GM18951 (cell line): ENCODE measurements at regions of chr1 and their contacts with region 1.

Region 1: GRCh38 chr1:93447516-93448291 is at the start of gene FNBP1L:
- POLR2A ChIP-seq: no peak

Region 2: GRCh38 chr1:93328809-93329760 is 118.6 kb before region 1 on chr1:
- in situ Hi-C with region 1: no loop called
- POLR2A ChIP-seq: no peak

Region 3: DNA sequence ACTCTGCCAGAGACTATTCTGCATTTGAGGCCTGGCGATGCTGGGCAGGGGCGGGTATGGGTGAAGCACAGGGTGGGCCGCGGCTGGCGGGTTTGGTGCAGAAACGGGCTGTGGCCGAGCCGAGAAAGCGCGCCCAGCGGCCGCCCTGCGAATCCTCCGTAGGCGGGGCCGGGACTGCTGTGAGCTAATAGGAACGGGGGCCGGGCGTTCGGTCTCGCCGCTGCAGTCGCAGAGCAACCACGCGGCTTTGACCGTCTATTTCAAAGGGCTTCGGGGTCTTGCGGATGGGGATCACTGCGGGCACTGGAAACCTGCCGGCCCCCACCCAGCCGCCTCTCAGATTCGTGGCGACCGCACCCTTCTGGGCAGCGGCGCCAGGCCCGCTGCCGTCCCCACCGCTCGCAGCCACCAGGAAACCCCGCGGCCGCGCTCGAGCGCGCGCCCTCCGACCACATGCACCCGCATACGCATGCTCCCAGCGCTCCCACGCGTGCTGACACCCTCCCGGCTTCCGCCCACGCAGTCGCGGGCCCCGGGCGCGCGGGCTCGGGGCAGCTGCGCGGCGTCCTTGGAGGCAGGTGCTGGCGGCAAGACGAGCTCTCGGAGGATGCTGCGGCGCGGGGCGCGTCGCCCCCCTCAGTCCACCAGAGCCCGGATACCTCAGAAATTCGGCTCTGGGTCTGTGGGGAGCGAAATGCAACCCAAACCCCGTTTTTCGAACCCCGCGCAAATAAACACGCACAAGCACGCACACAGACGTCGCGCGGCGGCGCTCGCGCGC is 398.7 kb after region 1 on chr1:
- in situ Hi-C with region 1: loop called (anchors 25 kb)
- POLR2A ChIP-seq: peak; percentile 62